ENCODE measurements at regions of chr9 and their contacts with region 1.

Region 1: DNA sequence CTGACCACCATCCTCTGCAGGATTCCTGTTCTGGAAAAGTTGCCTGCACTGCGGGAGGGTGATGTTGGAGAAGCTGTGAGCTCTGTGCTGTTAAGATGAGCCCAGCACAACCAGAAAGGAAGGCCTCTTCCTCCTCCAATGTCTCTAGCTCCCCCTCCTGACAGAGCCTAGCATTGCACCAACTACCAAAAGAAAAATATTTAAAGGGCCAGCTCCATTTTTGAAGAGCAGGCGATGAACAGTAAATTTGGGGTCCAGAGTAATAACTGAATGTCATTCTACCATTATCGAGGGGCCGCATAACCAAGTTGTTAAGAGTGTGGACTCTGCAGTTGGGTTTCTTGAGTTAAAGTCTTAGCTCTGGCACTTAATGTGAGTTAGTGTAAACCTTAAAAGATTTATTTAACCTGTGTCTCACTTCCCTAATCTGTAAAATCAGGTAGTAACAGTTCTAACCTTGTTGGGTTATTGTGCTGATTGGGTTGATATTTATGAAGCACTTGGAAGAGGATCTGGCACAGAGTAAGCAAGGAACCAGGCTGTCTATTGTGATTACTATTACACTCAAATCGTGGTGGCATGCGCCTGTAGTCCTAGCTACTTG is 3.9 kb downstream of the TEX53 start:
- DNase-seq: peak; percentile 51 to 83
- ATAC-seq: peak; percentile 85

Region 2: GRCh38 chr9:114405294-114406034 is 248.2 kb before region 1 on chr9:
- intact Hi-C with region 1: loop called (anchors 5 to 10 kb)
- DNase-seq: peak; percentile 74 to 83
- ATAC-seq: peak; percentile 74

Region 3: GRCh38 chr9:114413861-114414301 is 239.8 kb before region 1 on chr9:
- intact Hi-C with region 1: loop called (anchors 5 to 10 kb)
- DNase-seq: no peak
- ATAC-seq: no peak

Region 4: GRCh38 chr9:114487607-114488300 is 165.9 kb before region 1 on chr9:
- intact Hi-C with region 1: loop called in 1 of 2 experiments (anchors 5 kb)
- DNase-seq: peak; percentile 54 to 55
- ATAC-seq: peak; percentile 95

Region 5: GRCh38 chr9:114538241-114538640 is 115.4 kb before region 1 on chr9:
- intact Hi-C with region 1: no loop called
- DNase-seq: peak; percentile 63 to 68
- ATAC-seq: peak; percentile 100

Region 6: DNA sequence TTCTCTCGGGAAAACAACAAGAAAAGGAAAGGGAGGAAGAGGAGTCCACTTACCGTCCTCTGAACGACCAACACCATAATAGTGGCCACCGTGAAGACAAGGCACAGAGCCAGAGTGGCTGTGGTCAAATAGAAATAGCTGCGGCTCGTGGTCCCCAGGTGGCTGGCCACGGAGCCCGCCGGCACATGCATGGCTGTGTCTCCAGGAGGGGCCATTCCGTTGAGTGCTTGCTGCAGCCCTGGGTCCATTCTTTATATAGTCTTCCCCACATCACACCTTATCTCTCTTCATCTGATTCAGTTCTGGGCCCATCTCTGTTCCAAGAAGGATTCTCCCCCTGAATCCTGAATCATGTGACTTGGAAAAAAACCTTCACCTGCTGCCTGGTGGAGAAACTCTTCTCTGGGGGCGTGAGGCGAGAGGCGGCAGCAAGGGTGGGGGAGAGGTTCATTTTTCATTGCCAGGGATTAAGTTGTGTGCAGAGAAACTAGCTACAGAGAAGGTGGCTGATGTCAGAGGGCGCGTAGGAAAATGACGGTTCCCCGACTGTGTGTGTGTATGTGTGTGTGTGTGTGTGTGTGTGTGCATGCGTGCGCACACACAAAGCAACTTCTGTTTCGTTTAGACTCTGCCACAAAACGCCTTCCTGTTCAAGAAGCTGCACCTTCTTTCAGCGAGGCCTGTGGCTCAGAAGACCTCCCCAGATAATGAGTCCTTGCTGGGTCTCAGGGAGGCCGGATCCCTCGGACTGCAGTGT is 276.6 kb after region 1 on chr9 and contains the start of gene TNFSF8:
- intact Hi-C with region 1: no loop called
- DNase-seq: peak in 1 of 2 donors; percentile 43
- ATAC-seq: no peak
- total RNA-seq, gene TNFSF8: 0.24 to 1.0 TPM